SK-N-SH (cell line): ENCODE measurements at regions of chr1 and their contacts with region 1.

Region 1: GRCh38 chr1:201361652-201362504 is 15.6 kb downstream of the TNNT2 start:
- DNase-seq: peak; percentile 93
- H3K4me3 ChIP-seq: no peak overlapping the region; a peak in 1 of 4 replicates
- H3K27ac ChIP-seq: no peak overlapping the region
- H3K4me1 ChIP-seq: peaks cover 0 to 5% of the 10 kb centered on the region in 2 experiments; a peak in 1 of 4 replicates
- H3K27me3 ChIP-seq: no peaks in the 10 kb centered on the region; the same call in 1 of the 2 replicates
- CTCF ChIP-seq: peak; percentile 90
- EP300 ChIP-seq: no peak
- RAD21 ChIP-seq: peak; percentile 91

Region 2: GRCh38 chr1:201268604-201269151 is 93.2 kb before region 1 on chr1:
- CTCF ChIA-PET with region 1: interaction called, 99 read pairs
- POLR2A ChIA-PET with region 1: no interaction called
- DNase-seq: peak; percentile 89
- H3K4me3 ChIP-seq: no peak overlapping the region; a peak in 1 of 4 replicates
- H3K27ac ChIP-seq: peak overlapping the region; percentile 93 to 97
- H3K4me1 ChIP-seq: peaks cover 39 to 42% of the 10 kb centered on the region in 2 experiments
- H3K27me3 ChIP-seq: no peaks in the 10 kb centered on the region
- CTCF ChIP-seq: no peak
- EP300 ChIP-seq: peak in 1 of 2 experiments; percentile 86; a peak in 3 of 4 replicates
- RAD21 ChIP-seq: peak; percentile 25; the same call in 1 of the 2 replicates

Region 3: DNA sequence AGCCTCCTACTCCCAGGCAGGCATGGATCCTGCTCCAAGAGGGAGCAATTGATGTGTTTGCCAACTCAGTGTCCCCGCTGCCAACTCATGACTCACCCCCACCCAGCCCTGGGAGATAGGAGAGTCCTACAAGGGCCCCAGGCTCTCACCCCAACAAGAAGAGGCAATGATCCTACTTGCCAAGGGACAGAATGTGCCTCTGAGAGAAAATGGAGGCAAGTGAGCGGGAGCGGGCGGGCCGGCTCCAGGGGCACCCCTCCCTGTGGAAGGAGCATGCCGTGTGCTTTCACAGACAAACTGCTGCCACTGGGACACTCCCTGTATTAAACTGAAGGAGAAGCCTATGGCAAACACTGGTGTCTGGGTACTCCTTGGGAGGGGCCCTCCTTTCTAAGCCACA is 61.9 kb before region 1 on chr1:
- CTCF ChIA-PET with region 1: interaction called, 11 read pairs
- POLR2A ChIA-PET with region 1: no interaction called
- DNase-seq: no peak
- H3K4me3 ChIP-seq: no peak overlapping the region
- H3K27ac ChIP-seq: no peak overlapping the region; a peak in 1 of 4 replicates
- H3K4me1 ChIP-seq: peaks cover 3 to 54% of the 10 kb centered on the region in 2 experiments; a peak in 3 of 4 replicates
- H3K27me3 ChIP-seq: no peaks in the 10 kb centered on the region
- CTCF ChIP-seq: no peak
- EP300 ChIP-seq: no peak
- RAD21 ChIP-seq: no peak

Region 4: DNA sequence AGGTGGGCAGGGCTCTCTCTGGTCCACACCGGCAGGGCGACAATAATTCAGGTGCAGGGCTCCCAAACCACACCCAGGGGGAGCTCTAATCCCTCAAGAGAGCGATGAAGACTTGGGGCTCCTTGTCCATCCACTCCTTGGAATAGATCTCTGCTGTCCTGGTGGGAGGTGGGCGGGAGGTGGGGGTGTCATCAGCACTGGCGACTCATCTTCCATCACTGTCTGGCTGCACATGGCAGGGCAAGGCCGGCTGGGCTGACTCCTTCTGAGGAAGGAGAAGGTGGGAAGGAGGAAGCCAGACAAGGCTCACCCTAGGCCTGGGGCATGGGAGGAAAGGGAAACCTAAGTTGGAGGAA is 13.7 kb before region 1 on chr1:
- CTCF ChIA-PET with region 1: interaction called, 143 read pairs
- POLR2A ChIA-PET with region 1: no interaction called
- DNase-seq: peak; percentile 76
- H3K4me3 ChIP-seq: no peak overlapping the region
- H3K27ac ChIP-seq: no peak overlapping the region
- H3K4me1 ChIP-seq: peaks cover 0 to 7% of the 10 kb centered on the region in 2 experiments; a peak in 2 of 4 replicates
- H3K27me3 ChIP-seq: no peaks in the 10 kb centered on the region; the same call in 1 of the 2 replicates
- CTCF ChIP-seq: peak; percentile 65
- EP300 ChIP-seq: no peak
- RAD21 ChIP-seq: peak; percentile 58

Region 5: DNA sequence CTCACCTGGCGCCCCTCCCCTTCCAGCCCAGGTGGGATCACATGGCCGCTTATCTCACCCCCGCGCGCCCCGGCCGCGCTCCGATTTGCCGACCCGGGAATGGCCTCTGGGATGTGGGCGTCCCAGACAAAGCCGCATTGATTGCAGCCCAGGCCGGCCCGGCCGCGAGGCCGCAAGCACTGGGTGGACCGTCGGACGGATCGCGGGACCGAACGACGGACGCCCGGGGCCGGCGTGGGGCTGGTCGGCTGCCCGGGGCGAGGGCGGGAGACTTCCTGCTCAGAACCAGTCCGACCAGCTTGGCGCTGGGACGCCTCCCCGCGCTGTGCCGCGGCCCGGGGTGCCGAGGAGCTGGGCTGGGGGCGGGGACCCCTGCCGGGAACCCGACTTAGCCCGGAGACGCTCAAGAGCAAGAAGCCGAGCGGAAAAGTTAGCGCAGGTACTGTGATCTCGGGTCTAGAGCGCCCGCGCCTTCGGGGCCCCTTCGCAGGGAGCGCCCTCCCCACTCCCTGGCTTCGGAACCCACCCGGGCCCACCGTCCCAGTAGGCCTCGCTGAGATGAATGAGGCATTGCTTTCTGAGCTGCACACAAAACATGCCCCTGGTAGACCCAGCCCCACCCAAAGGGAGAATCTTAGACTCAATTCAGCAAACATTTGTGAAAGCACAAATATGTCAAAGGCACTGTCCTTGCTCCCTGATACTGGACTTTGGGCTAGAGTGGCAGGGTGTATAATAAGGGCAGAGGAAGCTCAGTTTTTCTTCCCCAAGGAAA is 37.7 kb after region 1 on chr1:
- CTCF ChIA-PET with region 1: interaction called, 19 read pairs
- POLR2A ChIA-PET with region 1: no interaction called
- DNase-seq: no peak
- H3K4me3 ChIP-seq: no peak overlapping the region
- H3K27ac ChIP-seq: no peak overlapping the region
- H3K4me1 ChIP-seq: peaks cover 0 to 9% of the 10 kb centered on the region in 2 experiments; a peak in 1 of 4 replicates
- H3K27me3 ChIP-seq: peaks cover 35% of the 10 kb centered on the region; the same call in 1 of the 2 replicates
- CTCF ChIP-seq: no peak
- EP300 ChIP-seq: no peak
- RAD21 ChIP-seq: no peak

Region 6: GRCh38 chr1:201468844-201469511 is 107.1 kb after region 1 on chr1 and contains the start of gene PHLDA3:
- CTCF ChIA-PET with region 1: no interaction called
- POLR2A ChIA-PET with region 1: no interaction called
- DNase-seq: peak; percentile 93
- H3K4me3 ChIP-seq: peak within 1 kb of the TSS; percentile 77 to 82
- H3K27ac ChIP-seq: peak within 1 kb of the TSS; percentile 83 to 94
- H3K4me1 ChIP-seq: peaks cover 13 to 29% of the 10 kb centered on the region in 2 experiments; a peak in 3 of 4 replicates
- H3K27me3 ChIP-seq: no peaks in the 10 kb centered on the region
- CTCF ChIP-seq: no peak
- EP300 ChIP-seq: no peak
- RAD21 ChIP-seq: no peak
- polyA plus RNA-seq, gene PHLDA3: 105 and 108 TPM in 2 replicates